PC-3 (cell line): ENCODE measurements at regions of chr2 and their contacts with region 1.

Region 1: GRCh38 chr2:204339212-204339715 is 206.0 kb upstream of the PARD3B start:
- DNase-seq: peak; percentile 62
- ATAC-seq: peak; percentile 76
- H3K4me3 ChIP-seq: peak overlapping the region; percentile 57
- H3K27ac ChIP-seq: peak overlapping the region; percentile 69
- H3K4me1 ChIP-seq: peaks cover 23% of the 10 kb centered on the region
- H3K27me3 ChIP-seq: no peaks in the 10 kb centered on the region
- CTCF ChIP-seq: no peak

Region 2: GRCh38 chr2:204280262-204280668 is 59.0 kb before region 1 on chr2:
- CTCF ChIA-PET with region 1: no interaction called
- POLR2A ChIA-PET with region 1: no interaction called
- intact Hi-C with region 1: no loop called
- DNase-seq: no peak
- ATAC-seq: no peak
- H3K4me3 ChIP-seq: no peak overlapping the region
- H3K27ac ChIP-seq: no peak overlapping the region
- H3K4me1 ChIP-seq: no peaks in the 10 kb centered on the region
- H3K27me3 ChIP-seq: peaks cover 6% of the 10 kb centered on the region; the same call in 1 of the 2 replicates
- CTCF ChIP-seq: no peak

Region 3: DNA sequence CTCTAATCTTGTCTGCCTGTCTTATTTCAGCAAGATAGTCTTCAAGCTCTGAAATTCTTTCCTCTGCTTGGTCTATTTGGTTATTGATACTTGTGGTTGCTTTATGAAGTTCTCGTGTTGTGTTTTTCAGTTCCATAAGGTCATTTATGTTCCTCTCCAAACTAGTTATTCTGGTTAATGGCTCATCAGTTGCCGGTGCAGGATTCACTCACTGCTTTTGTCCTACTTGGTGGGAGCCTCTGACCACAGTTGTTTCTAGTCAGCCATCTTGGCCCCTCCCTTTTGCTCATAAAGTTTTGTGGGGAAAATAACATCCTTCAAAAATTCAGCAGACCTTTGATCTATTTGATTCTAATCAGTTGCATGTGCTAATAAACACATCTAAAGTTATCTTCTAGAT is 47.4 kb after region 1 on chr2:
- CTCF ChIA-PET with region 1: no interaction called
- POLR2A ChIA-PET with region 1: no interaction called
- intact Hi-C with region 1: loop called (anchors 1 kb)
- DNase-seq: peak; percentile 94
- ATAC-seq: peak; percentile 67
- H3K4me3 ChIP-seq: no peak overlapping the region
- H3K27ac ChIP-seq: peak overlapping the region; percentile 30
- H3K4me1 ChIP-seq: peaks cover 12% of the 10 kb centered on the region
- H3K27me3 ChIP-seq: no peaks in the 10 kb centered on the region
- CTCF ChIP-seq: no peak

Region 4: GRCh38 chr2:204452464-204453023 is 113.3 kb after region 1 on chr2:
- CTCF ChIA-PET with region 1: no interaction called
- POLR2A ChIA-PET with region 1: no interaction called
- intact Hi-C with region 1: loop called (anchors 1 kb)
- DNase-seq: peak; percentile 96
- ATAC-seq: peak; percentile 97
- H3K4me3 ChIP-seq: peak overlapping the region; percentile 5; the same call in 1 of the 2 replicates
- H3K27ac ChIP-seq: peak overlapping the region; percentile 81
- H3K4me1 ChIP-seq: peaks cover 22% of the 10 kb centered on the region
- H3K27me3 ChIP-seq: no peaks in the 10 kb centered on the region
- CTCF ChIP-seq: no peak